ENCODE measurements at regions of chr9 and their contacts with region 1.

Region 1: DNA sequence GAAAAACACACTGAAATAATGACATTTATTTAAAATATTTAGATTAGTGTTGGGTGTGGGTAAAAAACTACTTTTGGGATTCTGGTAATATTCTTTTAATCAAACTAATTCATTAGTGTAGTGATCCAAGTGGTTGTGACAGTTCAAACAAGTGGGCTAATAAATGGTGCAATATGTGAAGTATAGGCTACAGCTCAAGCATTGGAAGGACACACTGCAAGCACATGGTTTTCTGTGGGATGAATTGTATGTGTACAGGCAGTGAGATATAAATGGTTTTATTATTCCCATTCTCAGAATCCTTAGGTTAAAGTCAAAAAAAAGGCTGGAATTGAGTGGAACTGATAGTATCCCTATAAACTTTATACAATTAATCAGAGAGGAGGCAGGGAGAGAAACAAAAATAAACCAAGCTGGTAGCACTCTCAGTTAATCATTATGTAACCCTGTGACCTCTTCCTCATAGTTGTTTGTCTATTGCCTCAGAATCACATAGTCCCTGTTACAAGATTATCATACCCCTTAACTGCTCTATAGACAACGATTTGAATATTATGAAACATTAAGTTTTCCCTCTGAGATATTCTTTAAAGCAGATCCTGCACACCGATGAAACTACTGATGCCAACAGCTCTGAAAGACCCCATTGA is 1755.4 kb upstream of the ACO1 start:
- DNase-seq: peak; percentile 1
- H3K4me3 Mint-ChIP-seq: peak overlapping the region; percentile 49
- H3K27ac Mint-ChIP-seq: peak overlapping the region; percentile 88
- H3K4me1 Mint-ChIP-seq: peaks cover 25% of the 10 kb centered on the region
- H3K27me3 Mint-ChIP-seq: no peaks in the 10 kb centered on the region
- CTCF ChIP-seq: no peak

Region 2: DNA sequence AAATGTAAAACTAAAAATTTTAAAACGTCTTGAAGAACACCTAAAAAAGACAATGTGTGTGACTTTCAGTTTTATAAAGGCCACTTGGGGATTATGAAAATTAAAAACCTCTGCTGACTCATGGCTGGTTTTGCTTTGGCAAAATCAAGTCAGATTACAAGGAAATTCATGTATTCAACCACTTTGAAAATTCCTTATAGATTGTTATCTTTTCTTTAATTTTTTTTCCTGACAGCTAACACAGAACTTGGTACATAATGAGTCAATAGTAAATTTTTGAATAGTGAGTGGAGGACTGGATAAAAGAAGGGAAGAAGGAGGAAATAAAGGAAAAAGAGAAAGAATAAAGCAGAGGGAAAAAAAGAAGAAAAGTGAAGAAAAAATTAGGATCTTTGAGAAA is 19.3 kb before region 1 on chr9:
- CTCF ChIA-PET with region 1: no interaction called
- intact Hi-C with region 1: loop called (anchors 2 kb)
- DNase-seq: no peak
- H3K4me3 Mint-ChIP-seq: no peak overlapping the region
- H3K27ac Mint-ChIP-seq: no peak overlapping the region
- H3K4me1 Mint-ChIP-seq: no peaks in the 10 kb centered on the region
- H3K27me3 Mint-ChIP-seq: no peaks in the 10 kb centered on the region
- CTCF ChIP-seq: no peak

Measured in Calu3 (cell line).